ENCODE measurements at regions of chr7 and their contacts with region 1.

Region 1: DNA sequence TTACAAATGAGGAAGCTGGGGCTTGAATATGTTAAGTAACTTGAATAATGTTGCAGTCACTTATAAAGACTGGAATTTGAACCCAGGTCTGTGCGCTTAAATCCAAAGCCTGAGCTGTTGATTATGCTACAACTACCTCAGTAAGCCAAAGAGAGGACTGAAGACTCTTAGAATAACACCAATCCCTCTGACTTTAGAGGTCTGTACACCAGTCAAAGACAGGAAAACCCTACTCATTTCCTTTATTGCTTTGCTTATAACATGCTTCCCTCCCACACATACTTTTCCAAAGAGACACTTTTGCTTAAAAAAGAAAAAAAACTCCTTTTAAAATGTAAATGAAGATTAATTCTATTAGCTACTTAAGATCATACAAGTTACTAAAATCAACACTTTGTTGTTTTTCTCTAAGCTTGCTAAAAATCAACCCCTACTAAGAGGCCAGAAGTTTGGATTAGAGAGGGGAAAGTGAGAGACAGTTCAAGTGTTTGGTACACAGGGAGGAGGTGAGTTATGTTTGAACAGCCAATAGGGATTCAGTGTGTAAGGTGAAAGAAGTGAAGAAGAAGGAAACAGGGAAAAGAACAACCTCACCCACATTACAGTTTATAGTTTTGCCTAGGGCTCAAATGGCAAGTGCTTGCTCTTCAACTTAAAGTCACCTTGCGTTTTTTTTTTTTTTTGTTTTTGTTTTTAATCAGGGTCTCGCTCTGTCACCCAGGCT is 74.8 kb downstream of the MDH2 start:
- DNase-seq: no peak
- ATAC-seq: no peak
- H3K4me3 ChIP-seq: no peak overlapping the region
- H3K27ac ChIP-seq: no peak overlapping the region
- H3K4me1 ChIP-seq: no peaks in the 10 kb centered on the region
- H3K27me3 ChIP-seq: peaks cover 0 to 7% (median 0%) of the 10 kb centered on the region in 9 donors
- CTCF ChIP-seq: no peak
- POLR2A ChIP-seq: no peak

Region 2: DNA sequence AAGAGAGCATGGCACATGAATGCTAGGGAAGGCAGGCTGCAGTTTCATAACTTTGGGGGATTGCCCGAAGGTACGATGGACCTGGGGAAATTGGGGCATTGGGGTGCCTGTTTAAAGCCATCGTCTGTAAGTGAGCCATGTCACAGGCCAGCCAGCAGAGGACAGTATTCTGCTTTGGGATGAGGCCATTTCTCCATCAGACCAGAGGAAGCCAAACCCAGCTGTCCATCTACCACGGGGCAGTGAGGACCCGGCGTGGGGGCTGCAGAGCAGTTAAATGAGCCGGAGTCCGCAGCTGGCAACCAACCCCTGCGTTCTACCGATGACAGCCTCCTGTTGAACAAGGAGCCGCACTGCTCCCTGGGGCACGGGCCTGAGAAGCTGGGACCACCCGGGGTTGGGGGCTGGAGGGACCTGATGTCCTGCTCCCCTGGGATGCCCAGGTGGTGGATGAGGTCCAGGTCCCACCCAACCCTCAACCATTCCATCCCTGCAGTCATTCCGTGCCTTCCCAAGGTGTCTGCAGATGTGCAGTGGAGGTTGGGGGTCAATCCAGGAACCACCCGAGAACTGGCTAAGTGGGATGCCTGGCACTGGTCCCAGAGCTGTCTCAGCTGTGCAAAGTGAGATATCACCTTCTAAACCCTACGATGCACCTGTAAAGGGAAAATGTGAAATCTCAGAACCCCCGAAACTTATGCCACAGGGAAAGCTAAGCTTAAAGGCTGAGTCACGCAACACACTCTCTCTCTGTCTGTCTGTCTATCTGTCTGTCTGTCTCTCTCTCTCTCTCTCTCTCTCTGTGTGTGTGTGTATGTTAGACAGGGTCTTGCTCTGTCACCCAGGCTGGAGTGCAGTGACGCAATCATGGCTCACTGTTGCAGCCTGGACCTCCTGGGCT is 255.9 kb before region 1 on chr7:
- intact Hi-C with region 1: loop called in 1 of 10 experiments (anchors 10 kb)
- DNase-seq: peak in 4 of 5 donors; percentile 50 to 67 (median 66)
- ATAC-seq: peak; percentile 77 to 93 (median 91)
- H3K4me3 ChIP-seq: no peak overlapping the region
- H3K27ac ChIP-seq: no peak overlapping the region
- H3K4me1 ChIP-seq: peaks cover 0 to 15% (median 3%) of the 10 kb centered on the region in 12 donors
- H3K27me3 ChIP-seq: no peaks in the 10 kb centered on the region
- CTCF ChIP-seq: peak; percentile 83 to 96 (median 91)
- POLR2A ChIP-seq: no peak

Region 3: DNA sequence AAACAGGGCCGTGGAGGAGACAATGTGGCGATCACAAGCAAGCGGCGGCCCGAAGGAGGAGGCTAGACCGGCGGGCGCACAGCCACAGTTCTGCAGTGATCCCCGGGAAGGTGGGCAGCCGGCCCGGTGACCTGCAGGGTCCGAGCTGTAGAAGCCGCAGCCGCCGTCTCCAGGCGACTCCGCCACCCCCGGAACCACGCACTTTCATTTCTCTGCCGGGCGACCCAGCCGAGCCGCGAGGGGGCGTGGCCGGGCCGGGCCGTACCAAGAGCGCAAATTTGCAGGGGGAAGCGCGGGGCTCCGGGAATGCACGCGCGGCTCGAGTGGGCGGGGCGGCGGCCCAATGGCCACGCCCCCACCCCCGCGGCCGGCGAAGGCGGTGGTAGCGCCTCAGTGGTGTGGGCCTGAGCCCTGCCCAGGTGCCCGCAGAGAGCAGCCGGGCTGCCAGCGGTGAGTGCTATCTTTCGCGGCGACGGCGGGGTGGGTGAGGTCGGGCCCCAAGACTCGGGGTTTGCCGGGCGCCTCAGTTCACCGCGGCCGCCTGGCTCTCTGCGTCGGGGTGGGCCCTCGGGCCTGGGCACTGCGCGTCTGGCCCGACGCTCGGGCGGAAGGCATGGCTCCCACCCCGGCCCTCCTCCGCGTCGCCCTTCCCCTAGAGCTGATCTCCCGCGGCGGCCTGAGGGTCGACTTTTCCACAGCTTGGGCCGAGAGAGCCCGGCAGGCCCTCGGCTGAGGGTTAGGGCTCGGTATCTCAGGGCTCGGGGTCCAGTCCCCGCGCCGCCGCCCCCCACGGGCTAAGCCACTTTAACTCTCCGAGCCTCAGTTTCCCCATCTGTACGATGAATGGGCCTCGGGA is 207.7 kb before region 1 on chr7 and contains the start of gene POR:
- intact Hi-C with region 1: no loop called
- DNase-seq: peak; percentile 95 to 98 (median 96)
- ATAC-seq: peak; percentile 96 to 99 (median 99)
- H3K4me3 ChIP-seq: peak within 1 kb of the TSS; percentile 72 to 100 (median 93)
- H3K27ac ChIP-seq: peak within 1 kb of the TSS; percentile 76 to 96 (median 94)
- H3K4me1 ChIP-seq: peaks cover 0 to 49% (median 21%) of the 10 kb centered on the region in 12 donors
- H3K27me3 ChIP-seq: no peaks in the 10 kb centered on the region
- CTCF ChIP-seq: peak in 5 of 12 donors; percentile 20 to 46 (median 30)
- POLR2A ChIP-seq: peak; percentile 79 to 100
- total RNA-seq, gene POR: 38.3 to 202 (median 80.0) TPM

Measured in heart left ventricle (tissue), 16 donors.